ENCODE measurements at regions of chr21 and their contacts with region 1.

Region 1: GRCh38 chr21:31198575-31198974 is 145.5 kb downstream of the TIAM1 start:
- DNase-seq: no peak
- ATAC-seq: peak; percentile 47
- H3K4me3 Mint-ChIP-seq: no peak overlapping the region
- H3K27ac Mint-ChIP-seq: no peak overlapping the region
- H3K4me1 Mint-ChIP-seq: peaks cover 50% of the 10 kb centered on the region
- H3K27me3 Mint-ChIP-seq: no peaks in the 10 kb centered on the region

Region 2: GRCh38 chr21:30676737-30677136 is 521.8 kb before region 1 on chr21:
- CTCF ChIA-PET with region 1: no interaction called
- POLR2A ChIA-PET with region 1: no interaction called
- intact Hi-C with region 1: no loop called
- DNase-seq: no peak
- ATAC-seq: no peak
- H3K4me3 Mint-ChIP-seq: no peak overlapping the region
- H3K27ac Mint-ChIP-seq: no peak overlapping the region
- H3K4me1 Mint-ChIP-seq: no peaks in the 10 kb centered on the region
- H3K27me3 Mint-ChIP-seq: no peaks in the 10 kb centered on the region

Region 3: DNA sequence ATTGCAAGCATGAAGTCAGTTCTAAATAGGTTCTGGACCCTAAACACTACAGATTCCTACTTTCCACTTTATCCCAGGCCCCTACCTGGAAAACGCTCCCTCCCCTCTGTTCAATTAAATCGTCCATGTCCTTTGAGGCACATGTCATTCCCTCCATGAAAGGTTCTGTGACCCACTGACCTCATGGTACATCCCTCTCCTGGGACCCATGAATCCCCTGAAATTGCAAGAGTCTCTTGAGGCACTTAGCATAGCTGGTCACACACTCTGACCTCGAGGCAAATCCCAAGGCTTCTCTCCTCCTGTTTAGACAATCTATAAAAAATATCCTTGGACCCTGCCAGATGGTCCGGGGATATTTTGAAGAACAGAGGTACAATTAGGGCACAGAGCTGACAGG is 126.0 kb before region 1 on chr21:
- CTCF ChIA-PET with region 1: no interaction called
- POLR2A ChIA-PET with region 1: no interaction called
- intact Hi-C with region 1: no loop called
- DNase-seq: no peak
- ATAC-seq: no peak
- H3K4me3 Mint-ChIP-seq: no peak overlapping the region
- H3K27ac Mint-ChIP-seq: no peak overlapping the region
- H3K4me1 Mint-ChIP-seq: no peaks in the 10 kb centered on the region
- H3K27me3 Mint-ChIP-seq: peaks cover 8% of the 10 kb centered on the region

Region 4: DNA sequence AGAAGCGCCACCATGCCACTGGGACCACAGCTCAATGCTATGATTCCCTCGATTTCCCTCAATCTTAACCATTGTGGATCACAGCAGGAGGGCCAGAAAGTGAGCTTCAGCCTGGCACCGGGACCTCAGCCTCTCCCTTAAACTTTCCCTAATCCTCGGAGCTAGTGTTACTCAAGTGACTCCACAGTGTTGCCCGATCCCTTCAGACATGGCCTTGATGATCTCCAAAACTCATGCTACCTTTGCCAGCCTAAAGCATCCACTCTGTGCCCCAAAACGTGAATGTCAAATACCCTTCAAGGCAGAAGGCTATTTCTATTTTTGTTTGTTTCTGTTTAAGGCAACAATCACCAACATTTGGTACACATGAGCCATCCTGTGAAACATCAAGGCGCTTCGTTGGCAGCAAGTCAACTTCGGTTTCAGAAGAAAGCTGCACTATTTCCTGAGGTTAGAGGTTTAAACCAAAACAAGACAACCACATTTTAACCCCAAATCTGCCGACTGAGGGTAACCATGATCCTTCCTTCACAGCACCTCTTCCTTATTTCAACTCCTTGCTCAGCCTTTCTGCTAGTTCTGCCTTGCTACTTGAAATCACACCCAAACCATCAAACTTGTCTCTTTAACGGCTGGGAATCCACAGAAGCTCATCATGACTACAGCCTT is 65.9 kb before region 1 on chr21:
- CTCF ChIA-PET with region 1: interaction called, 4 read pairs
- POLR2A ChIA-PET with region 1: no interaction called
- intact Hi-C with region 1: loop called in 1 of 2 experiments (anchors 1 kb)
- DNase-seq: peak; percentile 84
- ATAC-seq: peak; percentile 75
- H3K4me3 Mint-ChIP-seq: peak overlapping the region; percentile 43
- H3K27ac Mint-ChIP-seq: peak overlapping the region; percentile 92
- H3K4me1 Mint-ChIP-seq: peaks cover 60% of the 10 kb centered on the region
- H3K27me3 Mint-ChIP-seq: no peaks in the 10 kb centered on the region

Region 5: DNA sequence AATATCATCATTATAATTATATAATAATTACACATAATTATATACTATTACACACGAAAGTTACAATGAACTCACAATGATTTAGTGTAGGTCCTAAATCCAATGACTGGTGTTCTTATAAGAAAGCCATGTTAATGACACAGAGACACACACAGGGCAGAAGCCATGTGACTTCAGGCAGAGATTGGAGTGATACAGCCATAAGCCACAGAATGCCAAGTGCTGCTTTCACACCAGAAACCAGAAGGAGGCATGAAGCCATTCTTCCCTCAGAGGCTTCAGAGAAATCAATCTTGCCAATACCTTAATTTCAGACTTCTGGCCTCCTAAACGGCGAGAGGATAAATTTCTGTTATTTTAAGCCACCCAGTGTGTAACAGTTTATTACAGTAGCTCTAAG is 12.9 kb before region 1 on chr21:
- CTCF ChIA-PET with region 1: interaction called, 33 read pairs
- POLR2A ChIA-PET with region 1: interaction called, 8 read pairs
- intact Hi-C with region 1: loop called (anchors 1 kb)
- DNase-seq: peak; percentile 51
- ATAC-seq: peak; percentile 20
- H3K4me3 Mint-ChIP-seq: peak overlapping the region; percentile 70
- H3K27ac Mint-ChIP-seq: peak overlapping the region; percentile 99
- H3K4me1 Mint-ChIP-seq: peaks cover 82% of the 10 kb centered on the region
- H3K27me3 Mint-ChIP-seq: no peaks in the 10 kb centered on the region

Region 6: DNA sequence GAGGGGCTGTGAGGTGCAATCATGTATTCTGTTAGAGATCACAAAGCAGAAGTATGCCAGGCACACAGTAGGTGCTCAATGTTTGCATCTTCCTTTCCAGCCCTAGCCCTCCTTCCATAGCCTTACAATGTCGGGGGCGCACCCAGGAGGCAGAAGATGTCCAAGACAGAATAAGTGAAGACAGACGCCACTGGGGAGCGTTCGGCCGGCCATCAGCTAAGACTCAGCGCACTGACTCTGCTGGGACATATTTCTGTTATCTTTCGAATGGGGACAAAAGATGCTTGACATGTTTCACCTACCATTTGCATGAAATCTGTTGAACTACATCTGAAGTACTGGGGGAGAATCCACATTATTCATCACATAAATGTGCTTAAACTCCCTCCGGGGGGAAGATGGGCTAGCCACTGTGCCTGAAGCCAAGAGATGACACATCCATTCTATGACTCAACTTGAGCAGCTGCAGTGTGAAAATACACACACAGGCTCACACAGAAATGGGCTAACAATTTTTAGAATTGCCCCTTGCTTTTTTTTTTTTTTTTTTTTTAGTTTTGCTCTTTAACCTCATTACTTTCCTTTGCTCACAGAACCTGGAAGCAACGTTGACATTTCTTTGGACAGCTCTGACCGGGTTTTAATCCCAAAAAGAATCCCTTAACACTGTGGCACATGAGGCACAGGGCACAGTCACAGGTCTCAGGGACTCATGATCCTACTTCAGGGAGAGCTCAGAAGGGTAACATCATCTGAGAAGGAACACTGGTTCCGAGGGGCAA is 137.6 kb after region 1 on chr21:
- CTCF ChIA-PET with region 1: interaction called, 3 read pairs
- POLR2A ChIA-PET with region 1: no interaction called
- intact Hi-C with region 1: loop called (anchors 1 to 2 kb)
- DNase-seq: peak; percentile 70
- ATAC-seq: peak; percentile 81
- H3K4me3 Mint-ChIP-seq: no peak overlapping the region
- H3K27ac Mint-ChIP-seq: peak overlapping the region; percentile 71
- H3K4me1 Mint-ChIP-seq: peaks cover 73% of the 10 kb centered on the region
- H3K27me3 Mint-ChIP-seq: no peaks in the 10 kb centered on the region

Region 7: GRCh38 chr21:31426235-31426797 is 227.7 kb after region 1 on chr21:
- CTCF ChIA-PET with region 1: interaction called, 6 read pairs
- POLR2A ChIA-PET with region 1: no interaction called
- intact Hi-C with region 1: loop called in 1 of 2 experiments (anchors 5 kb)
- DNase-seq: peak; percentile 22
- ATAC-seq: peak; percentile 89
- H3K4me3 Mint-ChIP-seq: peak overlapping the region; percentile 18
- H3K27ac Mint-ChIP-seq: peak overlapping the region; percentile 53
- H3K4me1 Mint-ChIP-seq: peaks cover 20% of the 10 kb centered on the region
- H3K27me3 Mint-ChIP-seq: no peaks in the 10 kb centered on the region

Region 8: GRCh38 chr21:31537872-31538576 is 339.4 kb after region 1 on chr21:
- CTCF ChIA-PET with region 1: no interaction called
- POLR2A ChIA-PET with region 1: no interaction called
- intact Hi-C with region 1: no loop called
- DNase-seq: peak; percentile 55
- ATAC-seq: no peak
- H3K4me3 Mint-ChIP-seq: no peak overlapping the region
- H3K27ac Mint-ChIP-seq: no peak overlapping the region
- H3K4me1 Mint-ChIP-seq: no peaks in the 10 kb centered on the region
- H3K27me3 Mint-ChIP-seq: no peaks in the 10 kb centered on the region

Region 9: DNA sequence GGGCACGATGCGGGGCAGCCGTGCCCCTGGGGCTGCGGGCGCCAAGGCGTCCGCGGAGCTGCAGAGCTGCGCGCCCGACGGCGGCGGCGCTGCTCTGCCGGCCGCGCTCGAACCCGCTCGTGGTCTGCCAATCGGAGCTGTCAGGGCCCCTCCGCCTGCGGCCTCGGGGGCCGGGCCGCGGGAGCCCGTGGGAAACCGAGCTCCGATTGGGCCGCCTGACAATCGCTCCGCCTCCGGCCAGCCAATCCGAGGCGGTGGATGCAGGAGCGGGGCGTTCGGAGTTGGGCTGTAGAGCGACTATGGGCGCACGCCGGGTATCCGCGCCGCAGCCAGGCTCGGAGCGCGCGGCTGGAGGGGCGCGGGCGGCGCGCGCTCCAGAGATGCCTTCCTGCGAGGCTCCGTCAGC is 360.4 kb after region 1 on chr21:
- CTCF ChIA-PET with region 1: interaction called, 7 read pairs
- POLR2A ChIA-PET with region 1: interaction called, 5 read pairs
- intact Hi-C with region 1: loop called in 1 of 2 experiments (anchors 1 kb)
- DNase-seq: peak; percentile 97
- ATAC-seq: peak; percentile 88
- H3K4me3 Mint-ChIP-seq: peak overlapping the region; percentile 80
- H3K27ac Mint-ChIP-seq: no peak overlapping the region
- H3K4me1 Mint-ChIP-seq: peaks cover 34% of the 10 kb centered on the region
- H3K27me3 Mint-ChIP-seq: peaks cover 24% of the 10 kb centered on the region

Region 10: DNA sequence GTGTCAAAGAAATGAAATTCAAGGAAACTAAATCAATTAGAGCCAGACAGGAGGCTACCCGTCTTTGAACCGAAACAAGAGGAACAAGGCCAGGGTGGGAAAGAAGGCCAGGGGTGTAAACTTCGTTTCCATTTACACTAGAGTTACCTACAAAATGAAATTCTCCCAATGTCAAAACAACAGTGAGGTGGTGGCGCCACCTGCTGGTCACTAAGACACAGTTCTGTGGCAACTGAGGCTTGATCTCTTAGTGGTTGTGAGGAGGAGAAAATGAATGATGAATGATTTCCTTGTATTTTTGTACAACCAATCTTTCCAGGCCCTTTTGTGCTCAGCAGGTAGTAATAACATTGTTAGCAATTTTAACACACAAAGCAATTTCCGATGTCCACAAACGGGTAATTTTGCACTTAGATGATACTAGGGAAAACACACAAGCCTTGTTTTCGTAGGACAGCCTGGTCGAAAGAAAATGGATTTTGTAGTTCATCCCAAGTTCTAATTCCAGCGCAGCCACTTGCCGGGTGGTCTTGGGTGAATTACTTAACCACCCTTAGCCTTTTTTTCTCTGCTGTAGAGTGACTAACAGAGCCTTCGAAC is 406.1 kb after region 1 on chr21:
- CTCF ChIA-PET with region 1: interaction called, 4 read pairs
- POLR2A ChIA-PET with region 1: no interaction called
- intact Hi-C with region 1: loop called (anchors 1 kb)
- DNase-seq: peak; percentile 87
- ATAC-seq: peak; percentile 80
- H3K4me3 Mint-ChIP-seq: no peak overlapping the region
- H3K27ac Mint-ChIP-seq: no peak overlapping the region
- H3K4me1 Mint-ChIP-seq: peaks cover 10% of the 10 kb centered on the region
- H3K27me3 Mint-ChIP-seq: no peaks in the 10 kb centered on the region

Region 11: DNA sequence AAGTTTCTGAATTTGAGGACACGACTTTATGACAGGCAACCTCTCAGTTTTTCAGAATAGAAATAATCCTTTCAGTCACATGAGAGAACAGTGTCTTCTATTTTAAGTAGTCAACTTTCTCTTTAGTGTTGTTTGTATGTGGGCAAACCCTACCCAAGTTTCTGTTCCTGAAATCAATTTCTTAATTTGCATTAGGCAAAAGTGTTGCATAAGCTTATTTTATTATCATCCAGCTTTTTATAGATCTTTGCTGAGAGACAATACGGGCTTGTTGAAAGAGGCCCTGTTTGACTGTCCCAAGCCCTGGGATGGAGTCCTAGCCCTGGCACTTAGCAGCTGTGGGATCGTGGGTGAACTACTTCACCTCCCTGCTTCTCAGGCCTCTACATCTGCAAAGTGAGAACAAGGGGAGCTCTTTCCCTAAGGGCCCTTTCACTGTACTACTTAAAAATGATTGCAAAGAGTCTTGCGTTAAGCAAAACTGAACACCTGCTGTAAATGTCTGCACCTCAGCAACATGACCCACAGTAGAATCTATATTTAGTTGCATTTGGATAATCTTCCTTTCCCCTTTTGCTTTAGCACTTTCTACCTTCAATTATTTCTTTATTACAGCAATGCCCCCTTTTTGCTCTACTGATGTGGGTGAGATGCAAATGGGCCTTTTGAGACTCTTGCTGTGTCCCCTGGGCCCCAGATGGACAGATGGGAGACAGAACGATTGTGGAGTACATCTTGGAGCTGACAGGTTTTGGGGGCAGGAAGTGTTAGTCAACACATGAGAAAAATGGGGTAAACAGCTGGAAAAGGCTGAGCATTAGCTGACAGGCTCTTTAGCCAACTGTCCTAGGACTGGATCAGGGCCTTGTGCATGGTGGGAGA is 574.3 kb after region 1 on chr21:
- CTCF ChIA-PET with region 1: no interaction called
- POLR2A ChIA-PET with region 1: no interaction called
- intact Hi-C with region 1: no loop called
- DNase-seq: no peak
- ATAC-seq: no peak
- H3K4me3 Mint-ChIP-seq: no peak overlapping the region
- H3K27ac Mint-ChIP-seq: no peak overlapping the region
- H3K4me1 Mint-ChIP-seq: no peaks in the 10 kb centered on the region
- H3K27me3 Mint-ChIP-seq: no peaks in the 10 kb centered on the region

Measured in activated CD4-positive, alpha-beta T cell treated with anti-CD3 and anti-CD28 coated beads for 36 hours (primary cell).